K562 (cell line): ENCODE measurements at regions of chr7 and their contacts with region 1.

Region 1: DNA sequence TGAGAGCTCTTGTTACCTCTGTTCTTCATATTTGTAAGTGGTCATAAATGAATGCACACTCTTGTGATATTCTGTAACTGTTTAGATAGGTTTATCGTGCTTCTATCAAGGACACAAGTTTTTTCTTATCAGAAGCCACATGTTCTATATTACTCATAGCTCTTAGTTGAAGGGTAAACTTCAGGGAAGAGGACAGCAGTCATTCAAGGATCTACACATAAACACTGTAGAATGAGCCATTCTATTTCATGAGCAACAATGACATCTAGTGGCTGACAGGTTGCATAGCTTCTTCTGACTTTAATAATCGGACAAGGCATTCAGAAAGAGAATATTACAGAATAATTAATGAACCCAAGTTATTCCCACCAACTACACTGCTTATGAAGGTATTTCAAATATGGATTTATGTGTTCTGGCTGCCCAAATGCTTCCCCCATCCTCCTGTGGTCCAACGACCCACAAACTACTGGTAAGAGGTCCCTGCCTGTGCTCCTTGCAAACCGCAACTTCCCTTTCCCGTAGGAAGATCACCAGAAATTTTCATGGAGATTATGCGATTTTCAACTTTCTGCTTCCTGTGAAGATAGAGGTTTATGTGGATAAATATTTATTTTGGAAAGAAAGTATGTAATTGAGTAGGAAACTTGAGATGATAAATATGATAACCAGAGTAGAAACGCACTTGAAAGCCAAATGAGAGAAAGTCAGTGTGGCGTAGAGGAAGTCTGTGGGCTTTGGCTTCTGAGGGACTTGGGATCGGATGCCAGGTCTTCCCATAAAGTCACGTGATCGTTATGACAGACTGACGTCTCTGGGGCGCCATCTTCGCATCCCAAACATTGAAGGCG is 16.8 kb upstream of the ABCB5 start:
- DNase-seq: peak; percentile 27 to 58 (median 40)
- ATAC-seq: peak; percentile 88
- H3K4me3 ChIP-seq: no peak overlapping the region
- H3K27ac ChIP-seq: no peak overlapping the region
- H3K4me1 ChIP-seq: no peaks in the 10 kb centered on the region
- H3K27me3 ChIP-seq: no peaks in the 10 kb centered on the region; a peak in 1 of 5 replicates
- CTCF ChIP-seq: peak; percentile 57 to 87 (median 71); a peak in 5 of 6 replicates
- EP300 ChIP-seq: no peak
- POLR2A ChIP-seq: no peak
- RAD21 ChIP-seq: peak; percentile 92 to 96

Region 2: GRCh38 chr7:19713676-19714075 is 885.0 kb before region 1 on chr7:
- CTCF ChIA-PET with region 1: interaction called, 17 read pairs
- POLR2A ChIA-PET with region 1: interaction called, 3 read pairs
- in situ Hi-C with region 1: loop called (anchors 10 kb)
- intact Hi-C with region 1: loop called (anchors 1 kb)
- DNase-seq: peak; percentile 9 to 51 (median 22)
- ATAC-seq: peak; percentile 41; the same call in 1 of the 3 replicates
- H3K4me3 ChIP-seq: no peak overlapping the region
- H3K27ac ChIP-seq: no peak overlapping the region
- H3K4me1 ChIP-seq: peaks cover 0 to 7% of the 10 kb centered on the region in 2 experiments; a peak in 2 of 5 replicates
- H3K27me3 ChIP-seq: no peaks in the 10 kb centered on the region; a peak in 1 of 5 replicates
- CTCF ChIP-seq: peak in 2 of 3 experiments; percentile 35 to 69; a peak in 3 of 6 replicates
- EP300 ChIP-seq: no peak
- POLR2A ChIP-seq: no peak
- RAD21 ChIP-seq: peak; percentile 57 to 66; a peak in 3 of 4 replicates

Region 3: GRCh38 chr7:19747740-19748339 is 850.8 kb before region 1 on chr7:
- CTCF ChIA-PET with region 1: interaction called, 3 read pairs
- POLR2A ChIA-PET with region 1: interaction called, 5 read pairs
- in situ Hi-C with region 1: no loop called
- intact Hi-C with region 1: loop called (anchors 2 kb)
- DNase-seq: peak; percentile 16 to 45 (median 23)
- ATAC-seq: peak; percentile 75
- H3K4me3 ChIP-seq: no peak overlapping the region
- H3K27ac ChIP-seq: no peak overlapping the region
- H3K4me1 ChIP-seq: no peaks in the 10 kb centered on the region
- H3K27me3 ChIP-seq: no peaks in the 10 kb centered on the region
- CTCF ChIP-seq: peak; percentile 32 to 62 (median 44); a peak in 5 of 6 replicates
- EP300 ChIP-seq: no peak
- POLR2A ChIP-seq: no peak
- RAD21 ChIP-seq: peak; percentile 66

Region 4: GRCh38 chr7:19754521-19755116 is 844.1 kb before region 1 on chr7:
- CTCF ChIA-PET with region 1: interaction called, 3 read pairs
- POLR2A ChIA-PET with region 1: no interaction called
- in situ Hi-C with region 1: loop called (anchors 5 kb)
- intact Hi-C with region 1: loop called (anchors 1 kb)
- DNase-seq: peak; percentile 11 to 34 (median 12)
- ATAC-seq: no peak; the same call in 2 of the 3 replicates
- H3K4me3 ChIP-seq: no peak overlapping the region
- H3K27ac ChIP-seq: no peak overlapping the region
- H3K4me1 ChIP-seq: no peaks in the 10 kb centered on the region
- H3K27me3 ChIP-seq: no peaks in the 10 kb centered on the region
- CTCF ChIP-seq: peak; percentile 36 to 71 (median 47); a peak in 4 of 6 replicates
- EP300 ChIP-seq: no peak
- POLR2A ChIP-seq: no peak
- RAD21 ChIP-seq: peak; percentile 55 to 68

Region 5: DNA sequence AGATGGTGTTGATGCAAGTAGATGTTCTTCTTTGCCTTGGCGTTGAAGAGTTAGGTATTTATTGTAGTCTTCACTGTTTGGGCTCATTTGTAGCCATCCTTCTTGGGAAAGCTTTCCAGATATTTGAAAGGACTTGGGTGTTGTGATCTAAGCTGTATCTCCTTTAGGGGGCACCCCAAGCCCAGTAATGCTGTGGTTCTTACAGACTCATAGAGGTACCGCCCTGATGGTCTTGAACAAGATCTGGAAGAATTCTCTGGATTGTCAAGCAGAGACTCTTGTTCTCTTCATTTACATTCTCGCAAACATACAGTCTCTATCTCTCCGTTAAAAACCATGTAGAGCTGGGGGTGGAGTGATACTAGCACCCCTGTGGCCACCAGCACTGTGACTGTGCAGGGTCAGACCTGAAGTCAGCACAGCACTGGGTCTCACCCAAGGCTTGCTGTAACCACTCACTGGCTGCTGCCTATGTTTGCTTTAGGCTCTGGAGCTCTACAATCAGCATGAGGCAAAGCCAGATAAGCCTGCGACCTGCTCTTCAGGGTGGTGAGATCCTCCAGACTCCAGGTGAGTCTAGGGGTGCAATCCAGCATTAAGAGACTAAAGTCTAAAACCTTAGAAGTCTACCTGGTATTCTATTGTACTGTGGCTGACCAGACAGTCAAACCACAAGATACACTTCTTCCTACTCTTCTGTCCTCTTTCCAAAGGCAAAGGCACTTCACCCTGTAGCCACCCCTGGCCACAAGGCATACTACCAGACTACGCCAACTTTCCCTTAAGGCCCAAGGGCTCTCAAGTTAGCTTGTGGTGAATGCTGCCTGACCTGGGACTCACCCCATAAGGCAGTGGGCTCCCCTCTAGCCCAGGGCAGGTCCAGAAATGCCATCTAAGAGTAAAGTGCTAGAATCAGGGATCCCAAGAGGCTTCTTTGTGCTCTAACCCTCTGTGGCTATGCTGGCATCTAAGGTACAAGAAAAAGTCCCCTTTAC is 615.5 kb before region 1 on chr7:
- CTCF ChIA-PET with region 1: interaction called, 3 read pairs
- POLR2A ChIA-PET with region 1: no interaction called
- in situ Hi-C with region 1: no loop called
- intact Hi-C with region 1: loop called (anchors 2 kb)
- DNase-seq: peak in 1 of 4 experiments; percentile 36
- ATAC-seq: no peak; the same call in 2 of the 3 replicates
- H3K4me3 ChIP-seq: no peak overlapping the region
- H3K27ac ChIP-seq: no peak overlapping the region
- H3K4me1 ChIP-seq: no peaks in the 10 kb centered on the region
- H3K27me3 ChIP-seq: no peaks in the 10 kb centered on the region
- CTCF ChIP-seq: peak in 2 of 3 experiments; percentile 22 to 29; a peak in 2 of 6 replicates
- EP300 ChIP-seq: no peak
- POLR2A ChIP-seq: no peak
- RAD21 ChIP-seq: peak; percentile 45 to 70

Region 6: DNA sequence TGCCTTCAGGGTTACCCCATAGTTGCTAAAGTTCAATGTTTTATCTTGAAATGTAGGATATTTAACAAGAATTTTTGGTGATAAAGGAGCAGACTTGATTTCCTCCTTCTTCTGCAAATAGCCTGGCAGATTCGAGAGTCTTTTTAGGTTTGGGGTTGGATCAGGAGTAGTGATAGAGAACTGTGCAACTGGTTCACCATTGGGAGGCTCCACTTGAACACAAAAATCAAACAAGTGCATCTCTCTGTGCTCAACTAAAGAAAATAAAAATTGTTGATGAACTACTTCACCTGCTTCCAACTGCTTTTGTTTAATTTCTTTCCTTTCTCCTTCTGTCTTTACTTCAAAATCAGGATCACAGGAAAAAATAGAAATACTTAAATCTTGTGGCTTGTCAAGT is 440.0 kb before region 1 on chr7:
- CTCF ChIA-PET with region 1: no interaction called
- POLR2A ChIA-PET with region 1: no interaction called
- in situ Hi-C with region 1: no loop called
- intact Hi-C with region 1: loop called (anchors 5 kb)
- DNase-seq: peak in 1 of 4 experiments; percentile 25
- ATAC-seq: peak; percentile 86
- H3K4me3 ChIP-seq: no peak overlapping the region
- H3K27ac ChIP-seq: no peak overlapping the region
- H3K4me1 ChIP-seq: no peaks in the 10 kb centered on the region
- H3K27me3 ChIP-seq: no peaks in the 10 kb centered on the region
- CTCF ChIP-seq: peak in 2 of 3 experiments; percentile 24 to 54; a peak in 2 of 6 replicates
- EP300 ChIP-seq: no peak
- POLR2A ChIP-seq: no peak
- RAD21 ChIP-seq: peak; percentile 65 to 73

Region 7: DNA sequence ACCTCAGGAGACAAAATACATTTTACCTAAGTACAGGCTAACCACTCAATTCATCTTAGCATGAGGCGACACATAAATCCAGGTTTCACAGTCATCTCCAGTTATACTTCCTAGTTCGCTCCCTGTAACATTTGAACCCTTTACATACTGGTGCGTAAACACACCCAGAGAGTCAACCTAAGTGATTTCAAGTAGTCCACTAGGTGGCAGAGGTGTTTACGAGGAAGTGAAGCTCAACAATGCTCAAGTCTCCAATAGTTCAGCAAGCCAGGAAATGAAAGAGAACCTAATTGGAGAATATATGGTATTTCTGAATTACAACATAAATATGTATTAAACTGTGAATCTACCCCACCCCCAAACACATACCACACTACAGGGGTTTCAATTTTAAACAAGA is 59.5 kb before region 1 on chr7:
- CTCF ChIA-PET with region 1: interaction called, 3 read pairs
- POLR2A ChIA-PET with region 1: no interaction called
- in situ Hi-C with region 1: no loop called
- intact Hi-C with region 1: loop called (anchors 2 kb)
- DNase-seq: peak; percentile 10 to 44 (median 16)
- ATAC-seq: peak; percentile 82
- H3K4me3 ChIP-seq: no peak overlapping the region
- H3K27ac ChIP-seq: no peak overlapping the region
- H3K4me1 ChIP-seq: no peaks in the 10 kb centered on the region
- H3K27me3 ChIP-seq: no peaks in the 10 kb centered on the region
- CTCF ChIP-seq: peak; percentile 32 to 40 (median 37); a peak in 3 of 6 replicates
- EP300 ChIP-seq: no peak
- POLR2A ChIP-seq: no peak
- RAD21 ChIP-seq: peak in 1 of 2 experiments; percentile 42; a peak in 2 of 4 replicates